Activated CD8-positive, alpha-beta memory T cell treated with anti-CD3 and anti-CD28 coated beads, Interleukin-2, amount 10 ng/mL, durations not matched to agents 7 days and 5 days (primary cell): ENCODE measurements at regions of chr2 and their contacts with region 1.

Region 1: DNA sequence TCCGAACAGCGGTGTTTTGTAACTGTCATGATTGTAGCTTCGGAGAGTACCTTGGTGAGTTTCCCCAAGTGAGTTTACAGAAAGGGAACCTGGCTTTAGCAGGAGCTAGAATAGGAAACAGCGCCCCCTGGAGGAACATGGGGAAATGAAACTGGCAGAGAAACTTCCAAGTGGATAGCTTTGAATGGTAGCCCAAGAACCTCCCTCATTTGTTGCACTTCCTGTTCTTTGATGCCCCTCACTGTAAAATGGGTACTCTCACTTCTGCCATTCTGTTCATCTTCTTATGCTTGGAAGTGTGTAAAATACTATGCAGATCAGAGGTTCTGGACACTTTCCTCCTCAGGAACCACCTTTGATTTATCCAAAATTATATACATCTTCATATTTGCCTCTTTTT is 36.2 kb downstream of the CHST10 start:
- DNase-seq: peak; percentile 75
- ATAC-seq: peak; percentile 49
- H3K4me3 Mint-ChIP-seq: no peak overlapping the region
- H3K27ac Mint-ChIP-seq: no peak overlapping the region
- H3K4me1 Mint-ChIP-seq: no peaks in the 10 kb centered on the region
- H3K27me3 Mint-ChIP-seq: peaks cover 6% of the 10 kb centered on the region

Region 2: GRCh38 chr2:100262555-100263320 is 118.5 kb before region 1 on chr2:
- CTCF ChIA-PET with region 1: interaction called, 149 read pairs
- DNase-seq: peak; percentile 69
- ATAC-seq: peak; percentile 60
- H3K4me3 Mint-ChIP-seq: no peak overlapping the region
- H3K27ac Mint-ChIP-seq: no peak overlapping the region
- H3K4me1 Mint-ChIP-seq: no peaks in the 10 kb centered on the region
- H3K27me3 Mint-ChIP-seq: no peaks in the 10 kb centered on the region

Region 3: GRCh38 chr2:100291120-100291970 is 89.9 kb before region 1 on chr2:
- CTCF ChIA-PET with region 1: interaction called, 14 read pairs
- DNase-seq: peak; percentile 86
- ATAC-seq: peak; percentile 93
- H3K4me3 Mint-ChIP-seq: no peak overlapping the region
- H3K27ac Mint-ChIP-seq: no peak overlapping the region
- H3K4me1 Mint-ChIP-seq: peaks cover 11% of the 10 kb centered on the region
- H3K27me3 Mint-ChIP-seq: peaks cover 8% of the 10 kb centered on the region

Region 4: GRCh38 chr2:100365434-100365833 is 15.8 kb before region 1 on chr2:
- CTCF ChIA-PET with region 1: interaction called, 17 read pairs
- DNase-seq: no peak
- ATAC-seq: no peak
- H3K4me3 Mint-ChIP-seq: no peak overlapping the region
- H3K27ac Mint-ChIP-seq: no peak overlapping the region
- H3K4me1 Mint-ChIP-seq: peaks cover 5% of the 10 kb centered on the region
- H3K27me3 Mint-ChIP-seq: peaks cover 24% of the 10 kb centered on the region

Region 5: GRCh38 chr2:100391735-100392515 is 10.7 kb after region 1 on chr2:
- CTCF ChIA-PET with region 1: interaction called, 15 read pairs
- DNase-seq: peak; percentile 33
- ATAC-seq: no peak
- H3K4me3 Mint-ChIP-seq: no peak overlapping the region
- H3K27ac Mint-ChIP-seq: no peak overlapping the region
- H3K4me1 Mint-ChIP-seq: no peaks in the 10 kb centered on the region
- H3K27me3 Mint-ChIP-seq: no peaks in the 10 kb centered on the region

Region 6: DNA sequence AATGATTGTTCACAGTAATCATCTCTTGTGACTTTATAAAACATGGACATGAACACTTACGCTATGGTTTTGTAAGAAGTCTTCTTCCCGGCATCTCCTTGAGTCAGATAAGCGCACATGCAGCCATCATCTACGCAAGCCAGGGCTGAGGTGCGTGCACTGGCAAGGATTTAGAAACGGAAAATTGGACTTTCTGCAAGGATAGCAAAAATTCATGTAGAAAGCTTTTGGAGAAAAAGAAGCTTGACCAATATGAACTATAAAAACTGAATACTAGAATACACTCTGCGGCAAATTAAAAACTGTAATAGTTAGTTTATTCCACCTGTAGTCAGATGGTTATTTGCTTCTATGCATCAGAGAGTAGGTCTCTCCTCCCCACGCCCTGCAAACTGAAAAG is 95.4 kb after region 1 on chr2:
- CTCF ChIA-PET with region 1: no interaction called
- DNase-seq: no peak
- ATAC-seq: no peak
- H3K4me3 Mint-ChIP-seq: no peak overlapping the region
- H3K27ac Mint-ChIP-seq: no peak overlapping the region
- H3K4me1 Mint-ChIP-seq: no peaks in the 10 kb centered on the region
- H3K27me3 Mint-ChIP-seq: peaks cover 8% of the 10 kb centered on the region